ENCODE measurements at regions of chr9 and their contacts with region 1.

Region 1: GRCh38 chr9:114551883-114552685 is 35.5 kb upstream of the ATP6V1G1 start:
- H3K4me3 Mint-ChIP-seq: no peak overlapping the region
- H3K27ac Mint-ChIP-seq: peak overlapping the region; percentile 51
- H3K4me1 Mint-ChIP-seq: peaks cover 40% of the 10 kb centered on the region
- H3K27me3 Mint-ChIP-seq: peaks cover 2% of the 10 kb centered on the region

Region 2: GRCh38 chr9:114505187-114506081 is 46.6 kb before region 1 on chr9 and contains the start of gene WHRN:
- intact Hi-C with region 1: loop called (anchors 10 kb)
- H3K4me3 Mint-ChIP-seq: peak within 1 kb of the TSS; percentile 83
- H3K27ac Mint-ChIP-seq: peak within 1 kb of the TSS; percentile 72
- H3K4me1 Mint-ChIP-seq: peaks cover 6% of the 10 kb centered on the region
- H3K27me3 Mint-ChIP-seq: peaks cover 76% of the 10 kb centered on the region

Measured in dendritic cell treated with granulocyte-macrophage colony-stimulating factor and Interleukin-4, amounts not matched to agents 40 ng/mL and 50 ng/mL, for 4 days (primary cell).